Cardiac septum (tissue), 1 donor: ENCODE measurements at regions of chr15 and their contacts with region 1.

Region 1: DNA sequence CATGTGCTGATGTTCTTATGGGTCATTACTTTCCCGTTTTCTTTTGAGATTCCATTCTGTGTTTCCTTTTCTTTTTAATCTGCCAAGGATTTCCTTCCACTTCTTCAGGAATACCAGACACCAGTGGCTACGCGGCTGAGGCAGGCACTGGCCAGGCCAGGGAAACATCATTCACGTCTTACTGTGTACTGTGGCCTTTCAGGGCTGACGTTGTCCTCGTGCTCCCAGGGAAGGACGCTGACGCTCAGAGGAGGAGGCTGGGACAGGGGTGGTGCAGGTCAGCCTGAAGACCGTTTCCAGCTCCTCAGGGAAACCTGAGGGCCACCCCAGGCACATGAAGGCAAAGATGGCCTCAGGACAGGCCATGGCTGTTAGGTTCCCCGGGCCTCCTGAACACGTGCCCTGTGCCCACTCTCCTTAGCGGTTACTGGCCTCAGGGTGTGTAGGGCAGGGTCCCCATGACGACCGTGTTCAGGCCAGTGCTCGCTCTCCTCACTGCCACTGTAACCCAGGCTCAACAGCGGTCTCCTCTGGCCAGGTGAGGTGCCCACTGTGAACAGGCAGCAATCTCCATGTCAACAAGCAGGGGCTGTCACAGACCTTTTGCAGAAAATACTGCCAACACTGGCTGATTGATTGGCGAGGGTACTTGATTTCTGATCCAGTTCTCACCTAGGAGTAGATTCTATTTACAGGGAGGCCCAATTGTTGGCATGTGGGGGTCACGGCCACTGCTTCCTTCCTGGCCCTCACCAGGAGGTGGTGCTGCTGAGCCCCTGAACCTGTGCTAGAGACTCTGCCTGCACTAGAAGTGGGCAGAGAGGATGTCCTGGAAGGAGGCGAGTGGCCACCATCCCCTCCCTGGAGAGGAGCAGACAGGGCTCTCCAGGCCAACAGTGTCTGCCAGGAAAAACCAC is 169.5 kb downstream of the ATP10A start:
- DNase-seq: peak; percentile 72

Region 2: GRCh38 chr15:25508369-25509002 is 185.1 kb before region 1 on chr15:
- intact Hi-C with region 1: loop called (anchors 1 kb)
- DNase-seq: no peak